Activated T-helper 2 cell treated with anti-CD3 and anti-CD28 coated beads, Interferon-gamma antibody, Interleukin-2, Interleukin-4, amounts not matched to agents 10 μg/mL and 5 μg/mL and 100 μg/mL, durations not matched to agents 14 hours and 24 hours and 36 hours (primary cell): ENCODE measurements at regions of chr3 and their contacts with region 1.

Region 1: GRCh38 chr3:36993326-36994283 is at the start of gene MLH1:
- DNase-seq: peak; percentile 90
- H3K4me3 Mint-ChIP-seq: no peak within 1 kb of the TSS
- H3K27ac Mint-ChIP-seq: no peak within 1 kb of the TSS
- H3K4me1 Mint-ChIP-seq: peaks cover 37% of the 10 kb centered on the region
- H3K27me3 Mint-ChIP-seq: no peaks in the 10 kb centered on the region
- total RNA-seq, gene MLH1: 61.9 and 64.4 TPM in 2 replicates

Region 2: DNA sequence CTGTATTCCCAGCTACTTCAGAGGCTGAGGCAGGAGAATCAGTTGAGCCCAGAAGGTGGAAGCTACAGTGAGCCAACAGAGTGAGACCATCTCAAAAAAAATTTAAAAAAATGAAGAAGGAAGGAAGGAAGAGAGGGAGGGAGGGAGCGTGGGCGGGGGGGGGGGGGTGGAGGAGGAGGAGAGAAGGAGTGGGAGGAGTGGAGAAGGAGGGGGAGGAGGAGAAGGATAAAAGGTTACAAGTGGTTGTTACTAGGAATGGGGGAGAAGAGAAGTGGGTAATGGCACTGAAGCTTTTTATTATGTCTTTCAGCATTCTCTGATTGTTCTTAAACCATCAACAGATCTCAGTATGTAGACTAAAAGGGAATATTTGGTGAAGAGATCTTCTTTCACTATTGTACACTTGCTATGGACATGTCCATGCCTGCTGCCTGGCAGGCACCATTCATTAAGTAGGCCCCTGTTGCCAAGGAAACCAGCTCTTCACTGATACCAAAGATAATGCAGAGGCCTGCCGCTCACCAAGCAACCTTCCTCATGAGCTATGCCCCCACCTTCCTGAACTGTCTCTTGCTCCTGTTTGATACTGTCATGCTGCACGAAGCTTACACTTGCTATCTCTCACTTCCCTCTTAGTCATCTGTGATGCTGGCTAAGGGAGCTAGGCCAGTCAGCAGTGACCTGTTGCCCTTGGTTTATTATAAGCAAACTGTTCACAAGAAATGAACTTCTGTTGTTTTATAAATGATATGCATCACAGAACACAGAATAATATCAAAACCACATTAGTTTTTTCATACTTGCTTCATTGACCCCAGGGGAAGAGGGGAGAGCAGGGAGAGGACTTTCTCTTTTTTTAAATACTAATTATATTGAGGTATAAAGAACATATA is 23.8 kb before region 1 on chr3:
- intact Hi-C with region 1: loop called (anchors 1 kb)
- DNase-seq: peak; percentile 62
- H3K4me3 Mint-ChIP-seq: no peak overlapping the region
- H3K27ac Mint-ChIP-seq: peak overlapping the region; percentile 64
- H3K4me1 Mint-ChIP-seq: peaks cover 25% of the 10 kb centered on the region
- H3K27me3 Mint-ChIP-seq: no peaks in the 10 kb centered on the region

Region 3: GRCh38 chr3:37197810-37198371 is 204.3 kb after region 1 on chr3:
- intact Hi-C with region 1: no loop called
- DNase-seq: no peak
- H3K4me3 Mint-ChIP-seq: no peak overlapping the region
- H3K27ac Mint-ChIP-seq: no peak overlapping the region
- H3K4me1 Mint-ChIP-seq: no peaks in the 10 kb centered on the region
- H3K27me3 Mint-ChIP-seq: peaks cover 7% of the 10 kb centered on the region